PC-3 (cell line): ENCODE measurements at regions of chr10 and their contacts with region 1.

Region 1: GRCh38 chr10:77582710-77583115 is 54.9 kb downstream of the KCNMA1 start:
- DNase-seq: peak; percentile 100
- ATAC-seq: peak; percentile 85
- H3K4me3 ChIP-seq: peak overlapping the region; percentile 6; the same call in 1 of the 2 replicates
- H3K27ac ChIP-seq: peak overlapping the region; percentile 83
- H3K4me1 ChIP-seq: peaks cover 81% of the 10 kb centered on the region
- H3K27me3 ChIP-seq: no peaks in the 10 kb centered on the region
- CTCF ChIP-seq: no peak

Region 2: GRCh38 chr10:77173615-77174461 is 408.9 kb before region 1 on chr10:
- CTCF ChIA-PET with region 1: no interaction called
- POLR2A ChIA-PET with region 1: no interaction called
- intact Hi-C with region 1: loop called (anchors 2 kb)
- DNase-seq: peak; percentile 100
- ATAC-seq: peak; percentile 78
- H3K4me3 ChIP-seq: no peak overlapping the region
- H3K27ac ChIP-seq: no peak overlapping the region
- H3K4me1 ChIP-seq: peaks cover 16% of the 10 kb centered on the region
- H3K27me3 ChIP-seq: no peaks in the 10 kb centered on the region
- CTCF ChIP-seq: peak; percentile 100

Region 3: GRCh38 chr10:77504873-77505257 is 77.8 kb before region 1 on chr10:
- CTCF ChIA-PET with region 1: no interaction called
- POLR2A ChIA-PET with region 1: no interaction called
- intact Hi-C with region 1: loop called (anchors 2 kb)
- DNase-seq: peak; percentile 100
- ATAC-seq: peak; percentile 48
- H3K4me3 ChIP-seq: peak overlapping the region; percentile 15; the same call in 1 of the 2 replicates
- H3K27ac ChIP-seq: peak overlapping the region; percentile 82
- H3K4me1 ChIP-seq: peaks cover 80% of the 10 kb centered on the region
- H3K27me3 ChIP-seq: no peaks in the 10 kb centered on the region
- CTCF ChIP-seq: peak; percentile 90

Region 4: GRCh38 chr10:77513781-77514331 is 68.9 kb before region 1 on chr10:
- CTCF ChIA-PET with region 1: no interaction called
- POLR2A ChIA-PET with region 1: no interaction called
- intact Hi-C with region 1: loop called (anchors 2 kb)
- DNase-seq: peak; percentile 100
- ATAC-seq: peak; percentile 91
- H3K4me3 ChIP-seq: peak overlapping the region; percentile 49
- H3K27ac ChIP-seq: peak overlapping the region; percentile 82
- H3K4me1 ChIP-seq: peaks cover 69% of the 10 kb centered on the region
- H3K27me3 ChIP-seq: no peaks in the 10 kb centered on the region
- CTCF ChIP-seq: no peak

Region 5: GRCh38 chr10:77635402-77636227 is 52.9 kb after region 1 on chr10:
- CTCF ChIA-PET with region 1: interaction called, 4 read pairs
- POLR2A ChIA-PET with region 1: no interaction called
- intact Hi-C with region 1: loop called (anchors 2 kb)
- DNase-seq: peak; percentile 70
- ATAC-seq: peak; percentile 25
- H3K4me3 ChIP-seq: peak overlapping the region; percentile 75
- H3K27ac ChIP-seq: 0 out of 2 replicates have a peak overlapping the region, but pooled peaks have one; percentile 0
- H3K4me1 ChIP-seq: peaks cover 62% of the 10 kb centered on the region
- H3K27me3 ChIP-seq: no peaks in the 10 kb centered on the region
- CTCF ChIP-seq: no peak